ENCODE measurements at regions of chr17 and their contacts with region 1.

Region 1: DNA sequence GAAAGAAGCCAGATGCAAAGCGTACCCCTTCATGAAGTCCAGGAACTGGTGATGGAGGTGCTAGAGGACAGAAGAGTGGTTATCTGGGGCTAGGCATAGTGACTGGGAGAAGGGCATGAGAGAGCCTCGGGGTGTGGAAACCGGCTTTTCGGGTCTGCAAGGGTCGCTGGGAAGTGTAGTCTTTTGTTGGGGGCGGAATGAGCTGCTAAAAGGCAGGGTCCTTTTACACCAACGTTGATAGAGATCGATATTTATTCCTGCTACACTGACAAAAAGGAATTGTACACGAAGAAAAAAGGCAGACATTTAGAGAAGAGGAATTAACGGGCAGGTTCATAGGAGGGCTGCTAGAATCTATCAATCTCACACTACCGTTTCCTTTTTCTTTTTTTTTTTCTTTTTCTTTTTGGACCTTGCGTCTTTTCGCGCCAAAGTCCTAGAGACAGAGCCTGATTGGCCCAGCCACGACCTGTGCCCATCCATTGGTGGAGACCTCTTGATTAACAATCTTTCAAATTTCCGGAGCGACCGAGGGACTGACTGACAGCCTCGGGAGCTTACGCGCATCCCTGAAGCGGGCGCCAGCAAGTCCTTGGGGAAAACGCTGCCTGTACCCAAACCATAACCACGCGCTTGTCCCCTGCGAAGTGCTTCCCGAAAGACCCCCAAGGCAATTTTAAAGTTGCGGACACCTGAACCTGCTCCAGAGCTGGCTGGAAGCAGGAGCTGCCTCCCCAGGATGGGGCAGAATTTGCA is 27.7 kb upstream of the DHRS7B start:
- DNase-seq: peak; percentile 16
- H3K4me3 ChIP-seq: peak overlapping the region; percentile 67
- H3K27ac ChIP-seq: no peak overlapping the region
- H3K27me3 ChIP-seq: no peaks in the 10 kb centered on the region
- CTCF ChIP-seq: no peak

Region 2: GRCh38 chr17:21029032-21029431 is 70.1 kb before region 1 on chr17:
- CTCF ChIA-PET with region 1: no interaction called
- POLR2A ChIA-PET with region 1: no interaction called
- DNase-seq: no peak
- H3K4me3 ChIP-seq: no peak overlapping the region
- H3K27ac ChIP-seq: no peak overlapping the region
- H3K27me3 ChIP-seq: no peaks in the 10 kb centered on the region
- CTCF ChIP-seq: no peak

Region 3: GRCh38 chr17:21165922-21166594 is 66.9 kb after region 1 on chr17:
- CTCF ChIA-PET with region 1: interaction called, 11 read pairs
- POLR2A ChIA-PET with region 1: no interaction called
- DNase-seq: no peak
- H3K4me3 ChIP-seq: no peak overlapping the region
- H3K27ac ChIP-seq: no peak overlapping the region
- H3K27me3 ChIP-seq: no peaks in the 10 kb centered on the region
- CTCF ChIP-seq: no peak

Measured in AG04450 (cell line).